ENCODE measurements at regions of chr11 and their contacts with region 1.

Region 1: GRCh38 chr11:12235947-12236743 is 125.8 kb downstream of the MICAL2 start:
- DNase-seq: peak; percentile 71
- H3K4me3 ChIP-seq: no peak overlapping the region
- H3K27ac ChIP-seq: peak overlapping the region; percentile 36
- H3K4me1 ChIP-seq: peaks cover 49% of the 10 kb centered on the region
- H3K27me3 ChIP-seq: no peaks in the 10 kb centered on the region
- CTCF ChIP-seq: peak; percentile 45 to 54
- POLR2A ChIP-seq: no peak

Region 2: GRCh38 chr11:12087075-12088004 is 148.8 kb before region 1 on chr11:
- CTCF ChIA-PET with region 1: interaction called, 77 read pairs
- POLR2A ChIA-PET with region 1: interaction called, 4 read pairs
- dilution Hi-C with region 1: no loop called
- intact Hi-C with region 1: loop called (anchors 1 kb)
- DNase-seq: peak; percentile 50
- H3K4me3 ChIP-seq: peak overlapping the region in 1 of 3 experiments; percentile 54
- H3K27ac ChIP-seq: peak overlapping the region; percentile 99
- H3K4me1 ChIP-seq: peaks cover 76% of the 10 kb centered on the region
- H3K27me3 ChIP-seq: no peaks in the 10 kb centered on the region
- CTCF ChIP-seq: peak; percentile 14 to 35
- POLR2A ChIP-seq: peak; percentile 50

Region 3: DNA sequence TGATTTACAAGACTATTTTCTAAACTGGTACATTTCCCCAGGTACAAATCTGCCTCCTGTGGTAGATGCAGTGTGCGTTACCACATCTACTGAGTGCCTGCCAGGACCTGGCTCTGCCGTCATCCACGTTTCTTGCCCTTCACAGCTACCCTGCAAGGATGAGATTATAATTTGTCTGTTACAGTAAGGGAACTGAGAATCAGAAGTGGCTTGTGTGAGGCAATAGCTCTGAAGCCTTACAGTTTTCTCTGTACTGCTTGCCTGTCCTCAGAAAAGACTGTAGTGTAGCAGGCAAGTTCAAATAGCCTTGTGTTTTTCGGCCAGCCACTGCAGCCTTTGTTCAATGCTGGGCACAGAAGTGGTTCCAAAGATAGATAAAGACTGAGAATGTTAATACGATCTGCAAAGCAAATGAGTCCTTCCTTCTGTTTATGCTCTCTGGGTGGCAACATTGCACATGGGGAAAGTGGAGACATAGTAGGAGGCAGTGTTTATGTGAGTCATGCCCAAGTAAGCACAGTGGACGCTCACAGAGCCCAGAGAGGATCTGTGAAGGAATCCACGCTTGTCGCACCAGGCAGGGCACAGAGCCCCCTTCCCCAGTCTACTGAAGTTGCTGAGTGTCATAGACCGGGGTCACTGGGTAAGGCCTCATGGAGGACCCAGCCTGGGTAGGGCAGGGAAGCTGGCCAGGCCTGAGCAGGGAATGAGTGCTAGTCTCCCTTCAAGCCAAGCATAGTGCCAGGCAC is 76.6 kb before region 1 on chr11:
- CTCF ChIA-PET with region 1: interaction called, 30 read pairs
- POLR2A ChIA-PET with region 1: interaction called, 3 read pairs
- dilution Hi-C with region 1: no loop called
- intact Hi-C with region 1: no loop called
- DNase-seq: peak; percentile 47
- H3K4me3 ChIP-seq: no peak overlapping the region
- H3K27ac ChIP-seq: no peak overlapping the region
- H3K4me1 ChIP-seq: peaks cover 44% of the 10 kb centered on the region
- H3K27me3 ChIP-seq: no peaks in the 10 kb centered on the region
- CTCF ChIP-seq: no peak
- POLR2A ChIP-seq: no peak

Region 4: DNA sequence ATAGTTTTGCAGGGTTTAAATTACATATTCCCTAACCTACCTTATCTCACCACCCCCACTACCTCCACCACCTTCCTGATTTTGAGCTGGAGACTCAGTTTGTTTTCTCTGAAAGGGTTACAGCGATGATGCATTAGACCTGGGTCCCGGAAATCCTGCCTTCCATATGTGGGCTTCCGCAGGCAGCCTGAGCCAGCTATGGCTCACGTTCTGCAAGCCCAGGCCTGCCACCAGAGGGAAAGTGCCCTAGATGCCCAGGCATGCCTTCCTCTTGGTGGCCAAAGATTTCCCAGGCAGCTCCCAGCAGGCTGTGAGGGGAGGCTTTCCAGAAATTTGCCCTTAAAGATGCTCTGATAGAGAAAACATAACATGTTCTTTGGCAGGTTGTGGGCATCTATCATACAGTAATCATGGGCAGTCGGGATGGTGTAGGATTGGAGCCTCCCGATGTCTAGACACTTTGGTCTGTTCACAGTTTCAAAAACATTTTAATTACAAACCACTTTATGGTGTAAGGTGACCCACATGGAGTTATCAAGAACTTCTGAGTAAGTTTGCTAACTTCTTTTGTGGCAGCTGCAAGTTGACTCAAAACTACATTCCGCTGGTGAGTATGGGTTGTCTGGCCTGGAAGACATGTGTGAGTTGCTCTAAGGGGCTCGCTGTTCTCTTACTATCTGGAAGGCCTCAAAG is 46.5 kb before region 1 on chr11:
- CTCF ChIA-PET with region 1: interaction called, 5 read pairs
- POLR2A ChIA-PET with region 1: no interaction called
- dilution Hi-C with region 1: no loop called
- intact Hi-C with region 1: loop called (anchors 1 kb)
- DNase-seq: peak; percentile 19
- H3K4me3 ChIP-seq: no peak overlapping the region
- H3K27ac ChIP-seq: no peak overlapping the region
- H3K4me1 ChIP-seq: peaks cover 25% of the 10 kb centered on the region
- H3K27me3 ChIP-seq: no peaks in the 10 kb centered on the region
- CTCF ChIP-seq: no peak
- POLR2A ChIP-seq: no peak

Region 5: DNA sequence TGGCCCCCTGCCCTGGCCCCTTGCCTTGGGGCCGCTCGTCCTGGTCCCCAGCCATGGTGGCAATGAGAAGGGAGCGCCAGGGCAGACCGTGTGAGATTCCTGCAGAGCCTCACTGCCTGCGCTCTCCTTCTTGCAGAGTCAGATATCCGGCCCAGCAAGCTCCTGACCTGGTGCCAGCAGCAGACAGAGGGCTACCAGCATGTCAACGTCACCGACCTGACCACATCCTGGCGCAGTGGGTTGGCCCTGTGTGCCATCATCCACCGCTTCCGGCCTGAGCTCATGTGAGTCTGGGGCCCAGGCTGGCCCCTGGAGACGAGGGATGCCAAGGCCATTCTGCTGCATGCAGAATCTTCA is 11.6 kb before region 1 on chr11:
- CTCF ChIA-PET with region 1: interaction called, 37 read pairs
- POLR2A ChIA-PET with region 1: no interaction called
- dilution Hi-C with region 1: no loop called
- intact Hi-C with region 1: loop called (anchors 1 kb)
- DNase-seq: peak; percentile 28
- H3K4me3 ChIP-seq: no peak overlapping the region
- H3K27ac ChIP-seq: peak overlapping the region; percentile 65
- H3K4me1 ChIP-seq: peaks cover 35% of the 10 kb centered on the region
- H3K27me3 ChIP-seq: no peaks in the 10 kb centered on the region
- CTCF ChIP-seq: no peak
- POLR2A ChIP-seq: no peak